ENCODE measurements at regions of chr6 and their contacts with region 1.

Region 1: DNA sequence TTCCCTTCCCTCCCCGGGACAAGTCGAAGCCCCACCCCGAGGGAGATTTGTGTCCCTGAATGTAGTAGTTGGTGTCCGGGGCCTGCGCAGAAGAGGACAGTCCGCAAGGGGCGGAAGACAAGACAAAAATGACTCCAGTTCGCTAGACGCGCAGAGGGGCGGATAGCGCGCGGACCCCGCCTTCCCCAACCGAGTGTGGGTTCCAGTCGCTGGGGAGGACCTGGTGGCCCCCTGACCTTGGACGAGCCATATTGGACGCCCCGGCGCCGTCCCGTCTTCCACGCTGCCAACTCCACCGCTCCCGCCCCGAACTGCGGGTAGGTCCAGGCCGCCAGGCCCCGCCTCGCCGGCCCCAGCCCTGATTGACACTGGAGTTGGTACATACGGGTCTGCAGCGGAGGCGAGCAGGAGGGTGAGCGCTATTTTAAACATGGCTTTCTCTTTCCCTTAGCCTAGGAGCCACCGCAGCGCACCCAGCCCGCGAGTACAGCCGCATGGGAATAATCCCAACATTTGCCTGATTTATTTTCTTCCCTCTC is 802 bp downstream of the HMGN3 start:
- DNase-seq: peak; percentile 91
- H3K4me3 ChIP-seq: peak overlapping the region; percentile 57 to 100 (median 98)
- H3K27ac ChIP-seq: peak overlapping the region; percentile 75
- H3K4me1 ChIP-seq: peaks cover 20% of the 10 kb centered on the region
- H3K27me3 ChIP-seq: no peaks in the 10 kb centered on the region
- CTCF ChIP-seq: peak in 1 of 2 donors; percentile 26
- POLR2A ChIP-seq: peak; percentile 89

Region 2: DNA sequence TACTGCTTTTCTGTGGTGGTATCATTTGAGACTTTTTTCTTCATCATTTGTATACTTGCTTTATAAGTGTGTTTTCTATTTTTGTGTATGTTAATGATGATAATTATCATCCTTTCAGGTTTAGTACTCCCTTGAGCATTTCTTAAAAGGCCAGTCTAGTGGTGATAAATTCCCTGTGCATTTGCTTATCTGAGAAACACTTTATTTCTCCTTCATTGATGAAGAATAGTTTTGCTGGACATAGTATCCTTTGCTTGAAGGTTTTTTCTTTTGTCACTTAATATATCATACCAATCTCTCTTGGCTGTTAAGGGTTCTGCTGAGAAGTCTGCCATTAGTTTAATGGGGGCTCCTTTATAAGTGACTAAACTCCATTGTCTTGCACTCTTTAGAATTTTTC is 489.5 kb before region 1 on chr6:
- CTCF ChIA-PET with region 1: no interaction called
- POLR2A ChIA-PET with region 1: no interaction called
- dilution Hi-C with region 1: no loop called
- intact Hi-C with region 1: no loop called
- DNase-seq: no peak
- H3K4me3 ChIP-seq: no peak overlapping the region
- H3K27ac ChIP-seq: no peak overlapping the region
- H3K4me1 ChIP-seq: no peaks in the 10 kb centered on the region
- H3K27me3 ChIP-seq: no peaks in the 10 kb centered on the region
- CTCF ChIP-seq: no peak
- POLR2A ChIP-seq: no peak

Region 3: GRCh38 chr6:78867370-78868040 is 366.2 kb before region 1 on chr6 and contains the start of gene IRAK1BP1:
- CTCF ChIA-PET with region 1: no interaction called
- POLR2A ChIA-PET with region 1: no interaction called
- dilution Hi-C with region 1: no loop called
- intact Hi-C with region 1: loop called (anchors 5 kb)
- DNase-seq: peak; percentile 89
- H3K4me3 ChIP-seq: peak within 1 kb of the TSS; percentile 95 to 98 (median 95)
- H3K27ac ChIP-seq: peak within 1 kb of the TSS; percentile 58
- H3K4me1 ChIP-seq: peaks cover 8% of the 10 kb centered on the region
- H3K27me3 ChIP-seq: no peaks in the 10 kb centered on the region
- CTCF ChIP-seq: peak; percentile 16 to 46
- POLR2A ChIP-seq: peak; percentile 81
- total RNA-seq, gene IRAK1BP1: 2.7 and 3.0 TPM in 2 replicates

Region 4: DNA sequence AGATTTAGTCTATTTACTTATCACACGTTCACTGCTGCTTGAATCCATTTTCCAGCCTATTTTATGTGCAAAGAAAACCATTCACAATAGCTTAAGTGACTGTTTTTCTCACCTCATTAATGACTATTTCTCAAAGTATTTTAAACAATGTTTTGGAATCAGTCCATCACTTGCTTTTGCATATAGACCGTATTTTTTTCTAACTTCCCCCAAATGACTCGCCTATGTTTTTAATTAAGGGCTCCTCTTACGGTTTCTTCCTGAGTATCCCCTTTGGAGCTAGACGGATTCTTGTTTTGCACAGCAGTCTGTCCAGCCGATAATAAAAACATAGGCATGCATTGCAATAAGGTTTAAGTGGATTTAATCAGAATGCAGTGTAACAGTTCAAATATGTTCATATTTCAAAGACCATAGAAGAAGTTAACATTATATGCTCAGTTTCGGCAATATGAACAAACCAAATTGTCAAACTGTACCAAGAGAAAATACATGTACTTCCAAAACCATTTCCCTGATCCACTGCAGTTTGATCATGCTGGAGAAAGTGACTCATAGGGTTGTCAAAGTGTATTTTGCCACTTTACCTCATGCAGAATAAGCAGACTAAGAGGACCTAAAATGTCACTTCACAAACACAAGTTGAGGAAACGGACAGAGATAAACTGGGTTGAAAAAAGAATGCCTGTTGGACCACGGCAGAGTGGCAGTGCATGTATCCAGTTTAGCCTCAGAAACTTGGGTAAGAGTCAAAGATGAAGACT is 65.6 kb before region 1 on chr6:
- CTCF ChIA-PET with region 1: no interaction called
- POLR2A ChIA-PET with region 1: no interaction called
- dilution Hi-C with region 1: no loop called
- intact Hi-C with region 1: loop called (anchors 2 kb)
- DNase-seq: peak; percentile 76
- H3K4me3 ChIP-seq: no peak overlapping the region
- H3K27ac ChIP-seq: no peak overlapping the region
- H3K4me1 ChIP-seq: peaks cover 13% of the 10 kb centered on the region
- H3K27me3 ChIP-seq: no peaks in the 10 kb centered on the region
- CTCF ChIP-seq: no peak
- POLR2A ChIP-seq: no peak

Region 5: GRCh38 chr6:79421707-79422484 is 188.2 kb after region 1 on chr6:
- CTCF ChIA-PET with region 1: no interaction called
- POLR2A ChIA-PET with region 1: no interaction called
- dilution Hi-C with region 1: no loop called
- intact Hi-C with region 1: loop called (anchors 1 kb)
- DNase-seq: peak; percentile 99
- H3K4me3 ChIP-seq: no peak overlapping the region
- H3K27ac ChIP-seq: peak overlapping the region; percentile 24
- H3K4me1 ChIP-seq: peaks cover 17% of the 10 kb centered on the region
- H3K27me3 ChIP-seq: no peaks in the 10 kb centered on the region
- CTCF ChIP-seq: no peak
- POLR2A ChIP-seq: no peak

Region 6: DNA sequence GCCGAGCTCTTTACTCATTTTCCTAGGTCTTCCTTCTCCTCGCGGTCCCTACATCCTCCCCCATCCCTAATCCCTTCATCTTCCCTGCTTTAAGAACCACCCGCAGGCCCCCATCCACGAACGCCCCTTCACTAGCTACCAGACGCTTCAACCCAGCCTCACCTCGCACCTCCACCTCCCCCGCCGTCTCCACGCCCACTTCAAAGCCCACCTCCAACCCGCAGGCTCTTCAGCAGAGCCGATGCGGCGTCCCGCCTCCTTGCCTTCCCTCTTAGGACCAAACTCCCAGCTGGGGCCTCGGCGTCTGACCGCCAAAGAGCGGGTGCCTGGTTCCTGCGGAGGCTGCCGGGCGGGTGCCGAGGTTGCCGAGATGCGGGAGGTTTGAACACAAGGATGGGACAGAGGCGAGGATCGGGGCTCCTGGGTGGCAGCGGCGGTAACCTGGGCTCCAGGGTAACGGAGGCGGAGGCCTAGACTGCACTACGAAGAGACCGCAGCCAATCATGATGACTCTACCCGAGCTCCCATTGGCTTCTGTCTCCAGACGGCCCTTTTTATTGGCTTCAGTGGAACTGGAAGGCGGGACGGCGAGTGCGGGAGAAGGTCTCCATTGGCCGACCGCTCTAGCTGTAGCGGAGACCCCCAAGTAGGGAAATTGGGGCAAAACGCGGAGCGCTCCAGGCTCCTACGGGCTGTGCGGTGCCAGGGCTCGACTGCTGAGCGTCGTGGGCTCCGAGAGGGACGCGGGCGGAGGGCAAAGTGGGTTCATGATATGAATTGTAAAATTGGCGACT is 303.5 kb after region 1 on chr6 and contains the start of gene LCA5:
- CTCF ChIA-PET with region 1: no interaction called
- POLR2A ChIA-PET with region 1: no interaction called
- dilution Hi-C with region 1: no loop called
- intact Hi-C with region 1: loop called (anchors 1 kb)
- DNase-seq: peak; percentile 98
- H3K4me3 ChIP-seq: peak within 1 kb of the TSS; percentile 66 to 94 (median 79)
- H3K27ac ChIP-seq: peak within 1 kb of the TSS; percentile 73
- H3K4me1 ChIP-seq: peaks cover 12% of the 10 kb centered on the region
- H3K27me3 ChIP-seq: no peaks in the 10 kb centered on the region
- CTCF ChIP-seq: no peak
- POLR2A ChIP-seq: peak; percentile 80
- total RNA-seq, gene LCA5: 4.2 and 4.9 TPM in 2 replicates

Region 7: GRCh38 chr6:79713701-79714322 is 480.1 kb after region 1 on chr6:
- CTCF ChIA-PET with region 1: no interaction called
- POLR2A ChIA-PET with region 1: no interaction called
- dilution Hi-C with region 1: no loop called
- intact Hi-C with region 1: loop called (anchors 5 kb)
- DNase-seq: peak; percentile 64
- H3K4me3 ChIP-seq: no peak overlapping the region
- H3K27ac ChIP-seq: no peak overlapping the region
- H3K4me1 ChIP-seq: no peaks in the 10 kb centered on the region
- H3K27me3 ChIP-seq: no peaks in the 10 kb centered on the region
- CTCF ChIP-seq: peak; percentile 51 to 62
- POLR2A ChIP-seq: no peak

Measured in endothelial cell of umbilical vein (primary cell).